Cardiac septum (tissue), 1 donor: ENCODE measurements at regions of chr3 and their contacts with region 1.

Region 1: GRCh38 chr3:119098619-119099222 is 47.2 kb upstream of the TEX55 start:
- DNase-seq: no peak

Region 2: GRCh38 chr3:118884748-118885206 is 213.9 kb before region 1 on chr3:
- intact Hi-C with region 1: loop called (anchors 1 kb)
- DNase-seq: no peak

Region 3: DNA sequence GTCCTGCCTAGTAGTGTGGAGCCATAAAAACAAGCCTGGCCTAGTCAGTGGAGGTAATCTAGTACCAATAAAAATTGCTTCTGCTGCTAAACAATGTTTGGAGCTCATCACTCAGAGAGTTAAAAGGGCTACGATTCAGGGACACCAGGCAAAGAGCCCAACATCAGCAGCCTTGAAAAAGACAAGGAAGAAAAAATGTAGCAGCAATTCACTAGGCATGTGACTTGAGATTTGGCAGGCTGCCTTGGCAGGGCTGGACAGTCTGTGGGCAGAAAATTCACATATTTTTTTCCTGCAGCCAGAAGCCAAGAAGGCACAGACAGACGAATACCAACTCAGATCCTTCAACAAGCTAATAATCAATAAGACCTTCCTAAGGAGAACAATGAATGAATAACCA is 111.2 kb before region 1 on chr3:
- intact Hi-C with region 1: no loop called
- DNase-seq: no peak

Region 4: GRCh38 chr3:119125742-119126503 is 27.2 kb after region 1 on chr3:
- intact Hi-C with region 1: no loop called
- DNase-seq: no peak